ENCODE measurements at regions of chr11 and their contacts with region 1.

Region 1: GRCh38 chr11:66045177-66045639 is 3.8 kb downstream of the GAL3ST3 start:
- DNase-seq: peak; percentile 86
- ATAC-seq: peak; percentile 95
- H3K4me3 Mint-ChIP-seq: no peak overlapping the region
- H3K27ac Mint-ChIP-seq: no peak overlapping the region
- H3K4me1 Mint-ChIP-seq: peaks cover 14% of the 10 kb centered on the region
- H3K27me3 Mint-ChIP-seq: peaks cover 11% of the 10 kb centered on the region

Region 2: GRCh38 chr11:66061234-66061633 is 16.0 kb after region 1 on chr11:
- CTCF ChIA-PET with region 1: interaction called, 61 read pairs
- POLR2A ChIA-PET with region 1: interaction called, 4 read pairs
- DNase-seq: no peak
- ATAC-seq: peak; percentile 27
- H3K4me3 Mint-ChIP-seq: no peak overlapping the region
- H3K27ac Mint-ChIP-seq: no peak overlapping the region
- H3K4me1 Mint-ChIP-seq: peaks cover 23% of the 10 kb centered on the region
- H3K27me3 Mint-ChIP-seq: no peaks in the 10 kb centered on the region

Region 3: GRCh38 chr11:66100272-66101065 is 55.3 kb after region 1 on chr11:
- CTCF ChIA-PET with region 1: interaction called, 13 read pairs
- POLR2A ChIA-PET with region 1: no interaction called
- DNase-seq: peak; percentile 84
- ATAC-seq: peak; percentile 97
- H3K4me3 Mint-ChIP-seq: peak overlapping the region; percentile 77
- H3K27ac Mint-ChIP-seq: peak overlapping the region; percentile 95
- H3K4me1 Mint-ChIP-seq: peaks cover 45% of the 10 kb centered on the region
- H3K27me3 Mint-ChIP-seq: no peaks in the 10 kb centered on the region

Region 4: GRCh38 chr11:66136752-66137123 is 91.5 kb after region 1 on chr11:
- CTCF ChIA-PET with region 1: interaction called, 19 read pairs
- POLR2A ChIA-PET with region 1: no interaction called
- DNase-seq: no peak
- ATAC-seq: no peak
- H3K4me3 Mint-ChIP-seq: no peak overlapping the region
- H3K27ac Mint-ChIP-seq: no peak overlapping the region
- H3K4me1 Mint-ChIP-seq: peaks cover 34% of the 10 kb centered on the region
- H3K27me3 Mint-ChIP-seq: no peaks in the 10 kb centered on the region